MCF 10A (cell line): ENCODE measurements at regions of chr1 and their contacts with region 1.

Region 1: GRCh38 chr1:228109073-228109961 is at the start of gene MRPL55:
- DNase-seq: peak; percentile 99
- H3K4me3 Mint-ChIP-seq: peak within 1 kb of the TSS; percentile 95
- H3K27ac Mint-ChIP-seq: peak within 1 kb of the TSS; percentile 92
- H3K4me1 Mint-ChIP-seq: peaks cover 12% of the 10 kb centered on the region
- H3K27me3 Mint-ChIP-seq: no peaks in the 10 kb centered on the region
- CTCF ChIP-seq: no peak
- total RNA-seq, gene MRPL55: 85.4 and 111 TPM in 2 replicates

Region 2: DNA sequence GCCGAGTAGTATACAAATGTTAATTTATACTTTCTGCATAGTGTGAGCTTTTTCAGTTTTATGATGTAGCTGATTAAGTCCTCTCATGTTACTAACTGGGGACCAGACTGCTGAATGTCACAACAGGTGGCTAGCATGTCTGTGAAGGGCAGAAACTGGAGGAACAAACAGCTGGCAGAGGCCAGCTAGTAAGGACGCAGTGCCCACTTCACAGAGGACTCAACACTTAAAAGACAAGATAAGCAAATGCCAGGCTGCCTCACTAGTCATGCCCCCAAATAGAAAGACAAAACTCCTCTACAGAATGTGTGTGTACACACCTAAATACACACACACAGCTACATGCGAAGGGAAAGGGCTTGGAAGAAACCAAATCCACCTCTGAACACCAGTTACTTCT is 619.7 kb before region 1 on chr1:
- CTCF ChIA-PET with region 1: no interaction called
- POLR2A ChIA-PET with region 1: no interaction called
- intact Hi-C with region 1: loop called (anchors 10 kb)
- DNase-seq: no peak
- H3K4me3 Mint-ChIP-seq: no peak overlapping the region
- H3K27ac Mint-ChIP-seq: no peak overlapping the region
- H3K4me1 Mint-ChIP-seq: no peaks in the 10 kb centered on the region
- H3K27me3 Mint-ChIP-seq: peaks cover 3% of the 10 kb centered on the region
- CTCF ChIP-seq: no peak

Region 3: DNA sequence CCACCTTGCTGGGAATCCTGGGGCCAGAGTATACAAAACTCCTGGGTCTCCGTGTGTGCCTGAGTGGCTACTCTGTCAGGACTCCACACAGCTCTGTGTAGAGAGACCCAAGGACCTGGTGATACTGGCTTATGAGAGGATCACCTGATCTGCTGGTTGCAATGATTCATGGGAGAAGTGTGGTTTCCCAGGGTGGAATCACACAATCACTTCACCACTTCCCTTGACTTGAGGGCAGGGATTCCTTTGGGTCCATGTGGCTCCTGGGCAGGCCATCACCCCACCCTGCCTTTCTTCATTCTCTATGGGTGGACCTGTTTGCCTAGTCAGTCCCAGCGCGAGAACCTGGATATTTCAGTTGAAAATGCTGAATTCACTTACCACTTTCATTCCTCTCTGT is 280.5 kb before region 1 on chr1:
- CTCF ChIA-PET with region 1: no interaction called
- POLR2A ChIA-PET with region 1: no interaction called
- intact Hi-C with region 1: no loop called
- DNase-seq: no peak
- H3K4me3 Mint-ChIP-seq: no peak overlapping the region
- H3K27ac Mint-ChIP-seq: no peak overlapping the region
- H3K4me1 Mint-ChIP-seq: no peaks in the 10 kb centered on the region
- H3K27me3 Mint-ChIP-seq: peaks cover 23% of the 10 kb centered on the region
- CTCF ChIP-seq: no peak

Region 4: DNA sequence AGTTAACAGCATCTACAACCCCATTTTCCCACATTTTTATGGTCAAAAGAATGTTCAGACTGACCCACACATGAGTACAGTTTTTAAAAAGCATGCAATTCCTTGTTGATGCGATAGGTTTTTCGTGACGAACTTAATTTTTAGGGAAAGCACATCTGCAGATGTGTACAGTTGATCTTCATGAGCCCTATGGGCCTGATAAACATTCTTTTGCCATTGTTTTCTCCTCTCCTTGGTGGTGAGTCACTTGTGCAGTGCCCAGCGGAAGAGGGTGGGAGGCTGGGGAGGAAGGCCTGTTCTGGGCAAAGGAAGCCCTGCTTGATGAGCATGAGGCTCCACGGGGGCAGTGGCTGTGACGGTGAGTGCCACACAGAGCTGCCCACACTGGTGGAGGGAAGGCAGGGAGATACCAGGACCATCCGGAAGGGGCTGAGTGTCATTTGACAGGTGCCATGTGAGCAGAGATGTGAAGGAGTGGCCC is 21.5 kb before region 1 on chr1:
- CTCF ChIA-PET with region 1: interaction called, 9 read pairs
- POLR2A ChIA-PET with region 1: interaction called, 128 read pairs
- intact Hi-C with region 1: no loop called
- DNase-seq: peak; percentile 95
- H3K4me3 Mint-ChIP-seq: peak overlapping the region; percentile 77
- H3K27ac Mint-ChIP-seq: peak overlapping the region; percentile 78
- H3K4me1 Mint-ChIP-seq: peaks cover 82% of the 10 kb centered on the region
- H3K27me3 Mint-ChIP-seq: no peaks in the 10 kb centered on the region
- CTCF ChIP-seq: no peak

Region 5: DNA sequence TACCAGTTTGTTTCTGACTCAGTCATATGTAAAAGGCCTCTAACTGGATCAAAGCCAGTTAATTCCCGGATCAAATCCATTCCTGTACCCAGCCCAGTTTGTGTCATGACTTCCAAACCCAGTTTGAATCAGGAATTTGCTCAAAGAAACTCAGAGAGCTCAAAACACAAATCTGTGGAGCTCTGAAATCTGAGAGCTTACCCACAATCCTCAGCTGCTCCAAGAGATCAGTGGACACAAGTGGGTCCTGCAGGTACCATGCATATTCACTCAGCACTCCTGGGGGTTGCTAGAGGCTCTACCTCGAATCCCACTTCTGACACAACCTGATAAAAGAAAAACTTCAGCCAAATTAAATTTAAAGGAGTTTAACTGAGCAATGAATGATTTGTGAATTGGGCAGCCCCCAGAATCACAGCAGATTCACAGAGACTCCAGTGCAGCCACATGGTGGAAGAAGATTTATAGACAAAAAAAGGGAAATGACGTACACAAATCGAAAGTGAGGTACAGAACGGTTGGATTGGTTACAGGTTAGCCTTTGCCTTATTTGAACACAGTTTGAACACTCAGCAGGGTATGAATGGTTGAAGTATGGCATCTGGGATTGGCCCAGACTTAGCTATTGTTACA is 11.7 kb after region 1 on chr1:
- CTCF ChIA-PET with region 1: interaction called, 8 read pairs
- POLR2A ChIA-PET with region 1: interaction called, 84 read pairs
- intact Hi-C with region 1: no loop called
- DNase-seq: no peak
- H3K4me3 Mint-ChIP-seq: no peak overlapping the region
- H3K27ac Mint-ChIP-seq: no peak overlapping the region
- H3K4me1 Mint-ChIP-seq: no peaks in the 10 kb centered on the region
- H3K27me3 Mint-ChIP-seq: no peaks in the 10 kb centered on the region
- CTCF ChIP-seq: no peak

Region 6: DNA sequence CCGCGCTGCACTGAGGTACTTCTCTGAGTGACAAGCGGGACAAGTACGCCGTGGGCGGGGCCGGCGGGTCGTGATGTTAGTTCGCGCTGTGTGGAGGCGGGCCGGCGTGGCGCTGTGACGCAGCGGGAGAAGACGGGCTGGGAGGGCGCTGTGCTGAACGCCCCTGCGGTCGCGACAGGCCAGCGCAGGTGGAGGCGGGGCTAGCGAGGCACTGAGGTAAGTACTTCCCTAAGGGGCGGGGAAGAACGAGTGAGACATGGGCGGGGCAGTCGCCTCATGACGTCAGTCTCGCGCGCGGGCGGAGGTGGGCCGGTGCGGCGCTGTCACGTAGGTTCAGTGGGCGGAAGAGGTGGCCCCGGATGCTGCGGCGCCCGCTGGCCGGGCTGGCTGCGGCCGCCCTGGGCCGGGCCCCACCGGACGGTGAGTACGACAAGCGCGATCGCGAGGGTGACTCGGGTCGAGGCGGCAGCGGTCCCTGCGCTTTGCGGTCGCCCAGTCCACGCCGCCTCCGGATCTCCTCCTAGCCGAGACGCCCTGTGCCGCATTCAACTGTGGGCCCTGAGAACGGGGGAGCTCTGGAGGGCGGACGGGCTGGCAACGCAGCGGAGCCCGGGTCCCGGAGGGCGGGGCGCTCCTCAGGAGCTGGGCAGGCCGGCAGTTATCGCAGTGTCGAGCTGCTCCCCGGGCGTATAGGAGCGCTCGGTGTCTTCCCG is 30.8 kb after region 1 on chr1 and contains the start of gene GUK1:
- CTCF ChIA-PET with region 1: interaction called, 4 read pairs
- POLR2A ChIA-PET with region 1: interaction called, 26 read pairs
- intact Hi-C with region 1: loop called (anchors 1 kb)
- DNase-seq: peak; percentile 100
- H3K4me3 Mint-ChIP-seq: peak within 1 kb of the TSS; percentile 99
- H3K27ac Mint-ChIP-seq: peak within 1 kb of the TSS; percentile 95
- H3K4me1 Mint-ChIP-seq: peaks cover 25% of the 10 kb centered on the region
- H3K27me3 Mint-ChIP-seq: peaks cover 29% of the 10 kb centered on the region
- CTCF ChIP-seq: peak; percentile 32
- total RNA-seq, gene GUK1: 495 and 510 TPM in 2 replicates

Region 7: DNA sequence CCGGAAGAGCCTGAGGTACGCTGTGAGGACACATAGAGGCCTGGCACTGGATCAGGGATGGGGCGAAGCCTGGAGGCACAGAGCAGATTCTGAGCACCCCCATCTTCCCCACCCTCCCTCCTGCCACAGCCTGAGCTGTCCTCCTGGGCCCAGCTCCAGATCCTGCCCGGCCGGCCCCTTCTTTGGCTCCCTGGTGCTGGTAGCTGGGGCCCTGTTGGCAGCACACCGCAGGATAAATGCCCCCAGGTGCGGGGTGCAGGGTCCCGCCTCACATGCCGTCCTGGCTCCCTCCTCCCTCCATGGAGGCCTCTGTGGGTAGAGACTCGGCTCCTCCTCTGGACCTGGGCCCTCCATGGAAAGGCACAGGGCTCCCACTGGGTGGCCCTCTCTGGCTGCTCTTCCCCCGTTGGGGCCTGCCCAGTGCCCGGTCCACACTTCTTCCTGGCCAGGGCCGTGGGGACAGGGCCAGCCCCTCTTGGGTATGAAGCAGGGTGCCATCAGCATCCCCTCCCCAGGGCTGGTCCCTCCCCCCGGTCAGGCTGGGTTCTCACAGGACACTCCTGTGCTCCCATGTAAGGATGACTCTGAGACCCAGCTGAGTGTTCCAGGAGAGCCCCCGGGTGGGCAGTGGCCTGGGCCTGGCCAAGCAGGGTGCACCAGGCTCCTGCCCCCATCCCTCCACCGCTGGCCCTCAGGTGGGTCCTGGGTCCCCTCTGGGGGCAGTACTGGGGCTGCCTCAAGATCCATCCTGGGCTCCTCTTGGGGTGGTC is 97.5 kb after region 1 on chr1:
- CTCF ChIA-PET with region 1: no interaction called
- POLR2A ChIA-PET with region 1: no interaction called
- intact Hi-C with region 1: no loop called
- DNase-seq: peak; percentile 47
- H3K4me3 Mint-ChIP-seq: no peak overlapping the region
- H3K27ac Mint-ChIP-seq: no peak overlapping the region
- H3K4me1 Mint-ChIP-seq: peaks cover 8% of the 10 kb centered on the region
- H3K27me3 Mint-ChIP-seq: no peaks in the 10 kb centered on the region
- CTCF ChIP-seq: no peak